ENCODE measurements at regions of chr6 and their contacts with region 1.

Region 1: GRCh38 chr6:45383726-45384125 is 6.0 kb upstream of the SUPT3H start:
- DNase-seq: no peak
- ATAC-seq: no peak
- H3K4me3 ChIP-seq: no peak overlapping the region
- H3K4me3 Mint-ChIP-seq: no peak overlapping the region
- H3K27ac ChIP-seq: no peak overlapping the region
- H3K27ac Mint-ChIP-seq: no peak overlapping the region
- H3K4me1 ChIP-seq: peaks cover 0 to 3% of the 10 kb centered on the region in 2 experiments
- H3K4me1 Mint-ChIP-seq: peaks cover 4 to 6% (median 5%) of the 10 kb centered on the region in 3 donors
- H3K27me3 ChIP-seq: no peaks in the 10 kb centered on the region
- H3K27me3 Mint-ChIP-seq: peaks cover 0 to 3% of the 10 kb centered on the region in 2 donors

Region 2: GRCh38 chr6:45278367-45278766 is 105.4 kb before region 1 on chr6:
- CTCF ChIA-PET with region 1: no interaction called
- POLR2A ChIA-PET with region 1: no interaction called
- DNase-seq: no peak
- ATAC-seq: no peak
- H3K4me3 ChIP-seq: no peak overlapping the region
- H3K4me3 Mint-ChIP-seq: no peak overlapping the region
- H3K27ac ChIP-seq: no peak overlapping the region
- H3K27ac Mint-ChIP-seq: no peak overlapping the region
- H3K4me1 ChIP-seq: no peaks in the 10 kb centered on the region
- H3K4me1 Mint-ChIP-seq: peaks cover 0 to 11% (median 0%) of the 10 kb centered on the region in 3 donors
- H3K27me3 ChIP-seq: no peaks in the 10 kb centered on the region
- H3K27me3 Mint-ChIP-seq: no peaks in the 10 kb centered on the region

Region 3: DNA sequence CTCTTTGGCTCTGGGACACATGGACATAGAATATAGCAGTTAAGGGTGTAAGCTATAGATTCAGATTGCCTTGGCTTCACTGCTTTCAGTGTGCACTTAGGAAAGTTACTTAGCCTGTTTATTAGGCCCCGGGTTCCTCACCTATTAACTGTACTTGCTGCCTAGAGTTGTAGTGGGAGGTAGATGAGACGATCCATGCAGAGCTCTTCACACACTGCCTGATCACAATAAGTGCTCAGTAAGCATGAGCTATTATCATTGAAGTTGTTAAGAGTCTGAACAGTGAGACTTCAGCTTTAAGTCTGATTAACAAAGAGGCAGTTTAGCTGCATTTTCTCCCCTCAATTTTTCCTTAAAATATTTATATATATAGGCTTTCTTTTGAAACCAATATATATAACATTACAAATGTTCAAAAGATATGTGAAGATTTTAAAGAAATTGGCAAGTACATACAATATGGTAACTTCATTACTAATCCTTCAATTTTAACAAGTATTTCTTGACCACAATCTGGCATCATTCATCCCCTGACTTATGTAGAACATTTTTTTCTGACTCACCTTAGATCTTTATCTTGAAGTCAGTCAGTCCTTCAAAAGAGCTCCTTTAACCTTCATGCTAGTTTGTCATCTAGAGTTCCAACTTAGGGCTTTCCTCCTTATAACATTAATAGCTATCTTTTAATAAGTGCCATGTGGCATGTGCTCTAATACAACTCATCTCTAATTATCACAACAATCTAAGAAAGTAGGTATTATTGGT is 14.5 kb after region 1 on chr6:
- CTCF ChIA-PET with region 1: no interaction called
- POLR2A ChIA-PET with region 1: no interaction called
- DNase-seq: no peak
- ATAC-seq: peak in 1 of 4 experiments; percentile 30
- H3K4me3 ChIP-seq: no peak overlapping the region
- H3K4me3 Mint-ChIP-seq: no peak overlapping the region
- H3K27ac ChIP-seq: no peak overlapping the region
- H3K27ac Mint-ChIP-seq: no peak overlapping the region
- H3K4me1 ChIP-seq: no peaks in the 10 kb centered on the region
- H3K4me1 Mint-ChIP-seq: peaks cover 0 to 6% (median 5%) of the 10 kb centered on the region in 3 donors
- H3K27me3 ChIP-seq: no peaks in the 10 kb centered on the region
- H3K27me3 Mint-ChIP-seq: peaks cover 1 to 15% of the 10 kb centered on the region in 2 donors

Region 4: GRCh38 chr6:45721665-45722064 is 337.9 kb after region 1 on chr6:
- CTCF ChIA-PET with region 1: interaction called in 1 of 2 experiments, 14 read pairs
- POLR2A ChIA-PET with region 1: no interaction called
- DNase-seq: no peak
- ATAC-seq: no peak
- H3K4me3 ChIP-seq: no peak overlapping the region
- H3K4me3 Mint-ChIP-seq: no peak overlapping the region
- H3K27ac ChIP-seq: no peak overlapping the region
- H3K27ac Mint-ChIP-seq: no peak overlapping the region
- H3K4me1 ChIP-seq: no peaks in the 10 kb centered on the region
- H3K4me1 Mint-ChIP-seq: no peaks in the 10 kb centered on the region
- H3K27me3 ChIP-seq: no peaks in the 10 kb centered on the region
- H3K27me3 Mint-ChIP-seq: peaks cover 0 to 4% of the 10 kb centered on the region in 2 donors

Measured in T-cell (primary cell).